Activated CD8-positive, alpha-beta T cell treated with anti-CD3 and anti-CD28 coated beads, Interleukin-2, amount 10 ng/mL, durations not matched to agents 7 days and 5 days (primary cell): ENCODE measurements at regions of chr1 and their contacts with region 1.

Region 1: DNA sequence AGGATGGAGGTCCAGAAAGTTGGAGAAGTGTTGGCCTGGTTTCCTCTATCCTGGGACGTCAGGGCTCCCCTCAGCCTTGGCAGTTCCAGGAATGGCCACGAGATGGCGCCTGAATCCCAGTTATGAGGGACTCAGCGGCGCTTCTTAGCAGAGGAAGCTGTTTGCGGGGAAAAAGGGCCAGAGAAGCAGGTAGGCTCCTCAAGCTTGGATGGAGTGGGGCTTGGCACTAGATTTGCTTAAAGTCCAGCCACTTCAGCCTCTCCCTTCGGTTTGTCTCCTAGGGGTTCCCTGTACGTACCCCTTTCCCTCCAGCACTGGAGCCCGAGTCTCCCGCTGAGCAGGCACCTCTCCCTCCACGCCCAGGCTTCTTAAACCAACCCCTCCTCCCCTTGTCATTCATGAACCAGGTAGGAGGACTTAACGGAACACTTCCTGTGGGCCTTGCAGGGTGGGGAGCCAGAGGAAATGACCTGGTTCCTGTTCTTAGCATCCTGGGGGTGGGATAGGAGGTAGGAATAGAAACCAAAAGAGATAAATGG is 32.0 kb upstream of the TENT5B start:
- DNase-seq: peak; percentile 92
- ATAC-seq: peak; percentile 91
- H3K4me3 Mint-ChIP-seq: peak overlapping the region; percentile 73
- H3K27ac Mint-ChIP-seq: peak overlapping the region; percentile 78
- H3K4me1 Mint-ChIP-seq: peaks cover 22% of the 10 kb centered on the region
- H3K27me3 Mint-ChIP-seq: peaks cover 3% of the 10 kb centered on the region

Region 2: DNA sequence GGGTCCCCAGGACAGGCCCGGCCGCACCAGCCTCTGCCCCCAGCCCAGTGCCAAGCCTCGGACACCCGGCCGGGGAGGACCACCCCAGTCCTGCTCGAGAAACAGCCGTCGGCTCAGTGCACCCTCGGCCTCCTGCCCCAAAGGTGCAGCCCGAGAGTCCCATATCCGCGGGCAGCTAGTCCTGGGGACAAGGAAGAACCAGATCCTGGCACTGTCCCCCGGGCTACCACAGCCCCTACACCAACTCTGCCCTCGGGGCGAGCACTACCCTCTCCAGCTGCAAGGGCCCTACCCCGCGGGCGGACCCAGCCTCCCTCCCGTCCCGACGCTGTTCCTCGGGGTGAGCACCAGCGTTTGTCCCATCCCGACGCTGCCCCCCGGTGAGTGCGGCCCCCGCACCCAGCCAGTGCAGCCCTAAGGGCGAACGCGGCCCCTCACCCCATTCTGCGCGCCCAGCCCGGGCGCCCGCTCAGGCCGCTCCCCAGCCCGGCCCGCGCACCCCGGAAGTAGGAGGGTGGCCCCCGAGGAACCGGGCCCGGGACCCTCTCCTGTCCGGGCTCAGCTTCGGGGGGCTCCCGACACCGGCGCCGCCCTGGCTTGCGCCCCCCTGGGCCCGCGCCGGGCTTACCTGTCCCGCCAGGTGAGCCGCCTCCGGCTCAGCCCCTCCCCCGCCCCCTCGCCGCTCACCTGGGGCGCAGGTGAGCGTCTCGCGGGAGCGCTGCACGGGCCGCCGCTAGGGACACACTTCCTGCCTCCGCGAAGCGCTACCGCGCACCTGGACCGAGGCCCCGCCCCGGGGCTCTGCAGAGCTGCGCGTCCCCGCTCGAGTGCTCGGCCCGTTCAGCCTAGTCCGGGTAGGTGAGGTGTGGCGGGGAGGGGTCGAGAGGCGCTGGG is 84.7 kb before region 1 on chr1 and contains the start of gene KDF1:
- CTCF ChIA-PET with region 1: no interaction called
- POLR2A ChIA-PET with region 1: no interaction called
- DNase-seq: peak; percentile 43
- ATAC-seq: peak; percentile 72
- H3K4me3 Mint-ChIP-seq: peak within 1 kb of the TSS; percentile 44
- H3K27ac Mint-ChIP-seq: no peak within 1 kb of the TSS
- H3K4me1 Mint-ChIP-seq: peaks cover 11% of the 10 kb centered on the region
- H3K27me3 Mint-ChIP-seq: peaks cover 51% of the 10 kb centered on the region
- total RNA-seq, gene KDF1: not detected

Region 3: DNA sequence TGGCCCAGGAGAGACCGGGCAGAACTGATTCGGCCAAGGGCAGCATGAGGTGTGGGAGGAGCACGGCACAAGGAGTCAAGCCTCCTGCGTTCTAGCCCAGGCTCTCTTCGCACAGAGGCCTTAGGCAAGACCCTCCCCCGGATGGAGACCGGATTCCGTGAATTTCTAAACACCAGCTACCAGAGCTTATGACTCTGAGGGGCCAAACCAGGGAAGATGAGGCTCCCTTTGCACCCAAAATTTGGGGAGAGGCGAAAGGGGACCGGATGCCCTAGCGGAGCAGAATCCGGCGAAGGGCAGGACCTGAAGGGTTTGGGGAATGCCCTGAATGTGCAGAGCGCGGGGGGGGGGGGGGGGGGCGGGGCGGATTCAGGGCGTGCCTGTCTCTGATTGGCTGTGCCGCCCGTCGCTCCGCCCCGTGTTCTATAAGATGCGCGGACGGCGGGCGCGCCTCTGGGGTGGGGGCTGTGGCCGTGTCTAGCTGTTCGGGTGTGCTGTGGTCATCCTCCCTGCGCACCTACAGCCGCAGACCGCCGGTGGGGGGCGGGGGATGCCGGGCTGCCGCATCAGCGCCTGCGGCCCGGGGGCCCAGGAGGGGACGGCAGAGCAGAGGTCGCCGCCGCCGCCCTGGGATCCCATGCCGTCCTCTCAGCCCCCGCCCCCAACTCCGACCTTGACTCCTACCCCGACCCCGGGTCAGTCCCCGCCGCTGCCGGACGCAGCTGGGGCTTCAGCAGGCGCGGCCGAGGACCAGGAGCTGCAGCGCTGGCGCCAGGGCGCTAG is 51.3 kb before region 1 on chr1 and contains the start of gene TRNP1:
- CTCF ChIA-PET with region 1: interaction called, 66 read pairs
- POLR2A ChIA-PET with region 1: no interaction called
- DNase-seq: peak; percentile 67
- ATAC-seq: peak; percentile 63
- H3K4me3 Mint-ChIP-seq: peak within 1 kb of the TSS; percentile 68
- H3K27ac Mint-ChIP-seq: no peak within 1 kb of the TSS
- H3K4me1 Mint-ChIP-seq: peaks cover 19% of the 10 kb centered on the region
- H3K27me3 Mint-ChIP-seq: peaks cover 60% of the 10 kb centered on the region
- total RNA-seq, gene TRNP1: not detected

Region 4: DNA sequence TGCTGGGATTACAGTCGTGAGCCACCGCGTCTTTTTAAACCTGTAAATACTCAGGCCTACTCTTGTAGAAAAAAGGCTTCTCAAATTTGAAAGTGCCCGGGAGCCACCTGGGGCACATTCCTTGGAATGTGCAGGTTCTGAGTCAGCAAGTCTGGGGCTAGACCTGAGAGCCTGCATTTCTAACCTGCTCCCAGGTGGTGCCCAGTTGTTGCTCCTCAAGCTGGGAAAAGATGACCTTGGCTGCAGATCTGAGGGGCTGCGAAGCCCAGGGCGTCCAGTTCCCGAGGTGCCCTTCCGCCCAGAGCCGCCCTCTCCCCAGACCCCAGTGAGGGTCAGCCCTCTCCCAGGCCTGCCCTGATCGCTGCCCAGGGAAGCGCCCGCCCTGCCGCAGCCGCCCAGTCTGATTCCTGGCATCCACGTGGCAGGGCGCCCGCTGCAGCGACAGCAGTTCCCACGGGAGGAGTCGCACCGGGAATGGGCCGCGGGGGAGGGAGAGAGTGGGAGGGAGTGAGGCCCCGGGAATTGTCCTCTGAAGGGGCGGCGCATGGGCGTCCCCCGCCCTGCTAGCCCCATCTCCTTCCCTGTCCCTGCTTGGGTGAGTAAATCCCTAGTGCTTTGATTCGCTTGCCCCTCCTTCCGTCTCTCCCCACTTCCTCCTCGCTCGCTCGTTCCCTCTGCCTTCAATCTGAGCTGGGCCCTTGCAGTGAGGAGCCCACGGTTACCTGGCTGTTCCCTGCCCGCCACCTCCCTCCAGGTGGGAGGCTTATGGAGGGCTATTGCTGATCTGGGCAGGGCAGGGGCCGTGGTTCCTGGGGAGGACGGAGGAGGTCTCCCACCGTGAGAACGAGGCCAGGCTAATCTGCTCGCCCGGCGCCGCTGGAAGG is 13.2 kb before region 1 on chr1:
- CTCF ChIA-PET with region 1: interaction called, 40 read pairs
- POLR2A ChIA-PET with region 1: no interaction called
- DNase-seq: no peak
- ATAC-seq: peak; percentile 30
- H3K4me3 Mint-ChIP-seq: no peak overlapping the region
- H3K27ac Mint-ChIP-seq: no peak overlapping the region
- H3K4me1 Mint-ChIP-seq: peaks cover 6% of the 10 kb centered on the region
- H3K27me3 Mint-ChIP-seq: peaks cover 6% of the 10 kb centered on the region

Region 5: DNA sequence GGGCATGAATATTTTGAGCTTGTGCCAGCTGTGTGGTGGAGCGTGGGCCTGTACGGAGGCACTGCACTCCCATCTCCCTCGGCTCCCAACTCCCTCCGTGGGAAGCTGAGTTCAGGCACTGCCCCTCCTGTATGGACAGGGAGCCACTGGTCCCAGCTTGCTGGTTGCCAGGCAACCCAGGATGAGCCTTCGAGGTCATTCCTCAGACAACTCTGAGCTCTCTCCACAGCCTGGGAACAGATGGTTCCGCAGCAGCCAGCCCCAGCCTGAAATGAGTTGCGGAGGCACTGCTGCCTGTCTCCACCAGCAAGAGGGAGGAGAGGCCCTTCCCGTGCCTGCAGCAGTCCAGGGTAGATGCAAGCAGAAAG is 26.4 kb after region 1 on chr1:
- CTCF ChIA-PET with region 1: interaction called, 33 read pairs
- POLR2A ChIA-PET with region 1: no interaction called
- DNase-seq: no peak
- ATAC-seq: no peak
- H3K4me3 Mint-ChIP-seq: no peak overlapping the region
- H3K27ac Mint-ChIP-seq: no peak overlapping the region
- H3K4me1 Mint-ChIP-seq: no peaks in the 10 kb centered on the region
- H3K27me3 Mint-ChIP-seq: peaks cover 10% of the 10 kb centered on the region

Region 6: DNA sequence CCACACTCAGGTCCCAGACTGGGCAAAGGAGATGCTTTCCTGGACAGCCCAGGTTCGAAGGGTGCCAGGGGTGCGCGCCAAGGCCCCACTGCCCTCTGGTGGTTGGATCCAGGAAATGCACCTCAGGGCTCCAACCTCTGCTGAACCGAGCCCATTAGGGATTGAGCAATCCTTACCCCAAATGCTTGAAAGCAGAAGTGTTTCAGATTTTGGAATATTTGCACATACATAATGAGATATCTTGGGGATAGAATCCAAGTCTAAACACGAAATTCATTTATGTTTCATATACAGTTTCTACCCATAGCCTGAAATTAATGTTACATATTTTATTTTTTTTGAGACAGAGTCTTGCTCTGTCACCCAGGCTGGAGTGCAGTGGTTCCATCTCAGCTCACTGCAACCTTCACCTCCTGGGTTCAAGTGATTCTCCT is 52.8 kb after region 1 on chr1:
- CTCF ChIA-PET with region 1: interaction called, 460 read pairs
- POLR2A ChIA-PET with region 1: interaction called, 3 read pairs
- DNase-seq: peak; percentile 85
- ATAC-seq: peak; percentile 84
- H3K4me3 Mint-ChIP-seq: no peak overlapping the region
- H3K27ac Mint-ChIP-seq: no peak overlapping the region
- H3K4me1 Mint-ChIP-seq: peaks cover 21% of the 10 kb centered on the region
- H3K27me3 Mint-ChIP-seq: no peaks in the 10 kb centered on the region

Region 7: DNA sequence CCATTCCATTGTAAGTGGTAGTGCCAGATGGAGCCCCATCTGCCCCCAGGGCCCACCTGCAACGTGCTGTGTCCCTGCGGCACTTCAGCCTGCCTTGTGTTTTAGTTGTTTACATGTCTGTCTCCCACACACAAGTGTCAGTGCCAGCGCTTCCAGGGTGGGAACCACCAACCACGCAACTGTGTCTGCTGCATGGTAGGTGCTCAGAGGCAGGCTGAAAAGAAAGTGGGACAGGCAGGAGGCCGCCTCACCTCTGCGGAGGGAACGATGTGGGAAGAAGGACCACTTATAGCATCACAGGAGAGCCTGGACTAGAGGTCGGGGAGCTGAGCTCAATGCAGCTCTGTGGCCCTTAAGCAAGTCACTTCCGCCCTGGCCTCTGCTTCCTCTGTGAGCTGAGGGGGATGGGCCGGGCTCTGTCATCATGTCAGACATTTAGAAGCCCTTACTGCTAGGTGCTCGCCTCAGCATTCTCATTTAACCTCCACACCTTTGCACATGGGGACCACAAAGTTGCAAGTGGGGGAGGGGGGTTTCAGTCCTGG is 92.4 kb after region 1 on chr1:
- CTCF ChIA-PET with region 1: interaction called, 10 read pairs
- POLR2A ChIA-PET with region 1: no interaction called
- DNase-seq: peak; percentile 93
- ATAC-seq: peak; percentile 92
- H3K4me3 Mint-ChIP-seq: peak overlapping the region; percentile 82
- H3K27ac Mint-ChIP-seq: peak overlapping the region; percentile 99
- H3K4me1 Mint-ChIP-seq: peaks cover 58% of the 10 kb centered on the region
- H3K27me3 Mint-ChIP-seq: no peaks in the 10 kb centered on the region

Region 8: GRCh38 chr1:27284425-27285273 is 240.0 kb after region 1 on chr1:
- CTCF ChIA-PET with region 1: interaction called, 52 read pairs
- POLR2A ChIA-PET with region 1: no interaction called
- DNase-seq: peak; percentile 93
- ATAC-seq: peak; percentile 98
- H3K4me3 Mint-ChIP-seq: no peak overlapping the region
- H3K27ac Mint-ChIP-seq: no peak overlapping the region
- H3K4me1 Mint-ChIP-seq: peaks cover 6% of the 10 kb centered on the region
- H3K27me3 Mint-ChIP-seq: no peaks in the 10 kb centered on the region